ENCODE measurements at regions of chr12 and their contacts with region 1.

Region 1: DNA sequence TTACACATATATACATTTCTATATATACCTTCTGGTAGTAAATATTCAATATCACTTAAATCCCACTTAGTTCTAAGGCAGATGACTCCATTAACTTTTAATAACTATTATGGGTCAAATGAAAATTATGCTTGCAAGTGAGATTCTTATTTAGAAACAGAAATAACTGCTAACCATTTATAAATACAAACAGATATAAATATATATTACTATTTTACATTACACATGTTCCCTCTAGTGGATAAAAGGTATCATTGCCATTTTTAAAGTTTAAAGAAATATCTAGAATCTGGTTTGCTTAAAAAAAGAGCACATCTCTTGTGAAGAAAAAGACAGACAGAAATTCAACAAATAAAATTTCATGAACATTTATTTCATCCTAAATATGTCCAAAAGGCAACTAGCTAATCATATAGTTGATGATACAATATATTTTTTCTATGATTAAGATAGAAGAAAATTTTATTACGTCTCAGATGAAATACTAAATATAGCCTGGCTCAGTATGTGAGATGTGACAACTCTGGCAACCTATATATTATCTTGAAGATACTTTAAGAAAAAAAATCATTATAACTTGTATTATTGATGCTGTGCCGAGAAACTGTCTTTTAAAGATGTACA is 11.7 kb upstream of the RAD51AP1 start:
- DNase-seq: no peak
- H3K4me3 ChIP-seq: no peak overlapping the region
- H3K27ac ChIP-seq: no peak overlapping the region
- H3K4me1 ChIP-seq: no peaks in the 10 kb centered on the region
- H3K27me3 ChIP-seq: no peaks in the 10 kb centered on the region
- CTCF ChIP-seq: peak; percentile 45 to 52

Region 2: GRCh38 chr12:4353785-4354208 is 173.2 kb before region 1 on chr12:
- CTCF ChIA-PET with region 1: no interaction called
- dilution Hi-C with region 1: no loop called
- in situ Hi-C with region 1: no loop called
- intact Hi-C with region 1: loop called (anchors 5 kb)
- DNase-seq: peak; percentile 11
- H3K4me3 ChIP-seq: no peak overlapping the region
- H3K27ac ChIP-seq: no peak overlapping the region
- H3K4me1 ChIP-seq: no peaks in the 10 kb centered on the region
- H3K27me3 ChIP-seq: no peaks in the 10 kb centered on the region
- CTCF ChIP-seq: peak; percentile 27 to 50

Region 3: GRCh38 chr12:4421590-4422031 is 105.4 kb before region 1 on chr12:
- CTCF ChIA-PET with region 1: no interaction called
- dilution Hi-C with region 1: no loop called
- in situ Hi-C with region 1: loop called in 1 of 2 experiments (anchors 10 kb)
- intact Hi-C with region 1: loop called (anchors 1 kb)
- DNase-seq: peak; percentile 17
- H3K4me3 ChIP-seq: no peak overlapping the region
- H3K27ac ChIP-seq: no peak overlapping the region
- H3K4me1 ChIP-seq: no peaks in the 10 kb centered on the region
- H3K27me3 ChIP-seq: peaks cover 2% of the 10 kb centered on the region
- CTCF ChIP-seq: peak; percentile 47 to 63

Region 4: DNA sequence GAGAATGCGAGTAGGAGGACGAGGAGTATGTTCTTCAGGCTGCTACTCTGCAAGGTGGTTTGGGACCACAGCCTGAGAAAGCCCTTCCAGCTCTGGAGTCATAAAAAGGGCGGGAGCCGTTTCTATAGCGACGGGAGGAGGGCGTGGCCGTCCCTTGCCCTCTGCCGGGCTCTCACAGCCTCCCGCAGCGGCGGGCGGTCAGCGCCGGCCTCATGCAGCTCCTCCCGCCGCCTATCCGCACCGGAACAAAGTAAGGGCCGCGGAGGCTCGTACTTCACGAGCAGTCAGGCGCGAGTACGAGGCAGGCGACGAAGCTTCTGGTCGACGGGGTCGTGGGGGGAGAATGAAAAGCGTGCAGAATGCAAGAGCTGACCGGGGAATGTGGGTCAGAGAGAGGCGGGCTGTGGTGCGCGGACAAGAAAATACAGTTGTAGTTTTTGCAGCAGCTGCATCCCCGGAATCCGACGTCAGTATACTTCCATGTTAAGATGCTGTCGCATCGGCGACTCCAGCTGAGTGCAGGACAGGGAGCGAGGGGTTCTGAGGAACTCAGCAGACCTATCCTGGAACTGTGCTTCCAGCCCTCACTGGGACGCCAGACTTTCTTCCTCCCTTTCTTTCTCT is 35.1 kb after region 1 on chr12 and contains the start of gene DYRK4:
- CTCF ChIA-PET with region 1: no interaction called
- dilution Hi-C with region 1: no loop called
- in situ Hi-C with region 1: no loop called
- intact Hi-C with region 1: no loop called
- DNase-seq: peak; percentile 42
- H3K4me3 ChIP-seq: peak within 1 kb of the TSS in 1 of 3 experiments; percentile 27
- H3K27ac ChIP-seq: no peak within 1 kb of the TSS
- H3K4me1 ChIP-seq: no peaks in the 10 kb centered on the region
- H3K27me3 ChIP-seq: no peaks in the 10 kb centered on the region
- CTCF ChIP-seq: no peak
- total RNA-seq, gene DYRK4: 40.2 to 46.9 TPM

Measured in mammary epithelial cell (primary cell).